ENCODE measurements at regions of chr9 and their contacts with region 1.

Region 1: GRCh38 chr9:6667633-6668280 is 22.2 kb upstream of the GLDC start:
- DNase-seq: peak; percentile 49
- H3K4me3 ChIP-seq: no peak overlapping the region
- H3K27ac ChIP-seq: no peak overlapping the region
- H3K4me1 ChIP-seq: no peaks in the 10 kb centered on the region
- H3K27me3 ChIP-seq: no peaks in the 10 kb centered on the region
- CTCF ChIP-seq: peak; percentile 67

Region 2: GRCh38 chr9:6353851-6354686 is 313.7 kb before region 1 on chr9:
- CTCF ChIA-PET with region 1: no interaction called
- POLR2A ChIA-PET with region 1: no interaction called
- intact Hi-C with region 1: loop called (anchors 2 kb)
- DNase-seq: peak; percentile 71
- H3K4me3 ChIP-seq: no peak overlapping the region
- H3K27ac ChIP-seq: no peak overlapping the region
- H3K4me1 ChIP-seq: no peaks in the 10 kb centered on the region
- H3K27me3 ChIP-seq: peaks cover 35% of the 10 kb centered on the region
- CTCF ChIP-seq: peak; percentile 77

Region 3: GRCh38 chr9:6584881-6585597 is 82.7 kb before region 1 on chr9:
- CTCF ChIA-PET with region 1: interaction called, 3 read pairs
- POLR2A ChIA-PET with region 1: no interaction called
- intact Hi-C with region 1: loop called (anchors 1 kb)
- DNase-seq: peak; percentile 40
- H3K4me3 ChIP-seq: no peak overlapping the region
- H3K27ac ChIP-seq: no peak overlapping the region
- H3K4me1 ChIP-seq: no peaks in the 10 kb centered on the region
- H3K27me3 ChIP-seq: no peaks in the 10 kb centered on the region
- CTCF ChIP-seq: peak; percentile 64

Measured in A673 (cell line).